ENCODE measurements at regions of chr7 and their contacts with region 1.

Region 1: DNA sequence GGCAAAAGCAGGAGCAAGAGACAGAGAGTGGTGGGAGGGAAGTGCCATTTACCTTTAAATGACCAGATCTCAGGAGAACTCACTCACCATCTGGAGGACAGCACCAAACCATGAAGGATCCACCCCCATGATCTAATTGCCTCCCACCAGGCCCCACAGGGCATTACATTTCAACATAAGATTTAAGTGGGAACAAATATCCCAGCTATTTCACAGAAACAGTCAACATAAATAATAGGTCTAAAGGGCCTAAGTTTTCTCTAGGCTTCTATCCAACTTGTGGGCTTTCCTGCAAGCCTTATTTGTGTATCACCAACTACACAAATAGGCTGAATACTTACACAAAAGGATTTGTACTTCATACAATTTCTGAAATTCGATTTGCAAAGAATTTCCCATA is 196.8 kb upstream of the POT1 start:
- DNase-seq: no peak
- H3K4me3 ChIP-seq: no peak overlapping the region
- H3K27ac ChIP-seq: no peak overlapping the region
- H3K4me1 ChIP-seq: no peaks in the 10 kb centered on the region
- H3K27me3 ChIP-seq: no peaks in the 10 kb centered on the region
- CTCF ChIP-seq: no peak
- EP300 ChIP-seq: no peak
- POLR2A ChIP-seq: no peak

Region 2: GRCh38 chr7:123901044-123901443 is 1225.3 kb before region 1 on chr7:
- intact Hi-C with region 1: loop called in 1 of 4 experiments (anchors 5 kb)
- DNase-seq: no peak
- H3K4me3 ChIP-seq: no peak overlapping the region
- H3K27ac ChIP-seq: no peak overlapping the region
- H3K4me1 ChIP-seq: no peaks in the 10 kb centered on the region
- H3K27me3 ChIP-seq: no peaks in the 10 kb centered on the region
- CTCF ChIP-seq: no peak
- EP300 ChIP-seq: no peak
- POLR2A ChIP-seq: no peak